ENCODE measurements at regions of chr12 and their contacts with region 1.

Region 1: GRCh38 chr12:70590051-70590450 is 47.2 kb downstream of the PTPRB start:
- DNase-seq: peak; percentile 77
- ATAC-seq: peak; percentile 94
- H3K4me3 ChIP-seq: no peak overlapping the region
- H3K27ac ChIP-seq: no peak overlapping the region
- H3K4me1 ChIP-seq: no peaks in the 10 kb centered on the region
- H3K27me3 ChIP-seq: no peaks in the 10 kb centered on the region
- CTCF ChIP-seq: peak; percentile 94
- POLR2A ChIP-seq: no peak
- RAD21 ChIP-seq: peak; percentile 93

Region 2: GRCh38 chr12:70619471-70620152 is 29.6 kb after region 1 on chr12:
- CTCF ChIA-PET with region 1: interaction called, 10 read pairs
- POLR2A ChIA-PET with region 1: interaction called, 3 read pairs
- dilution Hi-C with region 1: no loop called
- in situ Hi-C with region 1: no loop called
- intact Hi-C with region 1: no loop called
- DNase-seq: peak; percentile 70
- ATAC-seq: no peak; the same call in 1 of the 2 replicates
- H3K4me3 ChIP-seq: no peak overlapping the region
- H3K27ac ChIP-seq: no peak overlapping the region
- H3K4me1 ChIP-seq: peaks cover 3% of the 10 kb centered on the region
- H3K27me3 ChIP-seq: peaks cover 1% of the 10 kb centered on the region; the same call in 1 of the 2 replicates
- CTCF ChIP-seq: no peak
- POLR2A ChIP-seq: no peak
- RAD21 ChIP-seq: no peak

Region 3: DNA sequence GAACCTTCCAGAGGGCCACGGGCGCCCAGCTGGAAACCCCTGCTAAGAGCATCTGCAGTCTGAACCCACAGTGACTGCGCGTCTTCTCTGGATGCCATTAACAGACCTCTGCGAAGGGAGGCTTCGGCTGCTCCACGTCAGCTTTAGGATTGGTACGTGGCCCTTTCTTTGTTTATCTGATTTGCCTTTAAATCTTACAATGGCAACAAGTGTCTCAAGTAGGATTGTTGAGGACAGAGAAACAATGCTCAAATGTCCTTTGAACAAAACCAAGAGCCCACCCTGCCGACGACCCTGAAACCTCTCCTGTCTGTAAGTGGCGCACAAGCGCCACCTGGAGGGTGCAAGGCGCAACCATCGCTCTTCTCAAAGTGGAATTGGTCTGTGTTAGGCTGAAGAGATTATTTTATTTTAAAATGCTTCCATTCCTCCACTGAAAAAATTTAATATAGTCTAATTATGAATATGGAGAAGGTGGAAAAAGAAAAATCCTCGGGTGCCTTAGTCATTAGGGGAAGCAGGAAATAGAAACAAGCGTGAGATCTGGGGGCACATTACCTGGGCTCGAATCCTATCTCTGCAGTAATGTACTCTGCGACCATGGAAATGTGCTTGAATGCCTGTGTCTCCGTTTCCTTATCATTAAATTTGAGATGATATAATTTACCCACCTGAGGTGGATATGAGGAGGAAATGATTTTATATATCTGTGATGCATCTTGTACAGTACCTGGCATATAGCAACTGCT is 129.8 kb after region 1 on chr12:
- CTCF ChIA-PET with region 1: interaction called, 6 read pairs
- POLR2A ChIA-PET with region 1: no interaction called
- dilution Hi-C with region 1: no loop called
- in situ Hi-C with region 1: loop called (anchors 5 kb)
- intact Hi-C with region 1: loop called (anchors 1 kb)
- DNase-seq: peak; percentile 36
- ATAC-seq: peak; percentile 85
- H3K4me3 ChIP-seq: peak overlapping the region; percentile 52
- H3K27ac ChIP-seq: no peak overlapping the region
- H3K4me1 ChIP-seq: no peaks in the 10 kb centered on the region
- H3K27me3 ChIP-seq: no peaks in the 10 kb centered on the region
- CTCF ChIP-seq: peak; percentile 91
- POLR2A ChIP-seq: no peak
- RAD21 ChIP-seq: peak; percentile 93

Region 4: GRCh38 chr12:71014180-71014785 is 424.2 kb after region 1 on chr12:
- CTCF ChIA-PET with region 1: no interaction called
- POLR2A ChIA-PET with region 1: no interaction called
- dilution Hi-C with region 1: no loop called
- in situ Hi-C with region 1: no loop called
- intact Hi-C with region 1: loop called (anchors 10 kb)
- DNase-seq: peak; percentile 21
- ATAC-seq: peak; percentile 51; the same call in 1 of the 2 replicates
- H3K4me3 ChIP-seq: no peak overlapping the region
- H3K27ac ChIP-seq: no peak overlapping the region
- H3K4me1 ChIP-seq: no peaks in the 10 kb centered on the region
- H3K27me3 ChIP-seq: no peaks in the 10 kb centered on the region
- CTCF ChIP-seq: peak; percentile 40; the same call in 1 of the 2 replicates
- POLR2A ChIP-seq: no peak
- RAD21 ChIP-seq: peak; percentile 42

Measured in IMR-90 (cell line).